ENCODE measurements at regions of chr18 and their contacts with region 1.

Region 1: DNA sequence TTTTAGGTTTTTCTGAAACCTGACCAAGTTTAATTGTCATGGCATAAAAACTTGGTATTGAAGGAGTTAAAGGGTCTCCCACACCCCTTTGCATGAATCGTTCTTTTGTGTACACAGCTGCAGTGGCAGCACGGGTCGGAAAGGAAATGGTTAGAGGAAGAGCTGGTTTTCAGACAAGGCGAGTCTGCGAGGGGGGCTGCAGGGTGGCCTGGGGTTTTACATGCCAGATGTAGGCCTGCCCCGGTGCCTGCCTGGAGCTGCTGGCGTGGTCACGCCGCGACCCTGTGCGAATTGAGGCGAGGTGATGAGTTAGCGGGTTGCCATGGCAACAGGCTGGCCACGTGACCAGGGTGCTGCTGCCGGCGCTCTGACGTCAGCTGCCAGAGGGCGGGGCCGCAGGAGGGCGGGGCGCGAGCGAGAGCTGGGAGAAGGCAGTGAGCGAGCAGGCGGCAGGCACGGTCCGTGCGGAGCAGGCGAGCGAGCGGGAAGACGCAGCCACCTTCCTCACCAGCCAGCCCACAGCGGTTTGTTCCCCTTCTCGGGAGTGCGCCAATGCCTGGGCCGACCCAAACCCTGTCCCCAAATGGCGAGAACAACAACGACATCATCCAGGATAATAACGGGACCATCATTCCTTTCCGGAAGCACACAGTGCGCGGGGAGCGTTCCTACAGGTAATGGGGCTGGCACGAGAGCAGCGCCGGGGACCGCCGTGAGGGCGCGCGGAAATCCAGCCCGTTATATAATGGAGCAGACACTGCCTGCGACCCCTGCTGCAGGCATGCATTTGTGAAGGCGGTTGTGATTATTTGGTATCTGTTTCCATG is at the start of gene MAPRE2:
- DNase-seq: peak; percentile 100
- total RNA-seq, gene MAPRE2: 164 TPM

Region 2: DNA sequence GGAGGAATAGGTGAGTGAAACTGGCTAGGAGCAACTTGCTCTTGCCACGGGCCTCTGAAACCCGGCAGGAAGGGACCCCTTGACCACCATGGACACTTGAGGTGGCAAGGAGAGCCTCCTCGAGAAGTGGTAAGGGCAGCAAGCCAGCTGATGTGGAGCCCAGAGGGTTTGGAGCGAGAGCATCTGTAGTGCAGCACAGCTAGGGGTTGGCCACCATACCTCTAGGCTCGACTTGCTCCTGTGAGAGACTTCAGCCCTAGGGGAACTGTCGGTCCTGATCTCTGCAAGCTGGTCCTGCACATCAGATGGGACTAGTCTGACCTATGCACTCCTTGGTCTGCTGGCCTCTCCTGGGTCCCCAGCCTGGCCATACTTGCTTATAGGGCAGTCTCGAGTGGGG is 1759.1 kb before region 1 on chr18:
- intact Hi-C with region 1: no loop called
- DNase-seq: no peak

Region 3: GRCh38 chr18:34976899-34977837 is 64.0 kb before region 1 on chr18:
- intact Hi-C with region 1: loop called (anchors 5 kb)
- DNase-seq: peak; percentile 92

Region 4: DNA sequence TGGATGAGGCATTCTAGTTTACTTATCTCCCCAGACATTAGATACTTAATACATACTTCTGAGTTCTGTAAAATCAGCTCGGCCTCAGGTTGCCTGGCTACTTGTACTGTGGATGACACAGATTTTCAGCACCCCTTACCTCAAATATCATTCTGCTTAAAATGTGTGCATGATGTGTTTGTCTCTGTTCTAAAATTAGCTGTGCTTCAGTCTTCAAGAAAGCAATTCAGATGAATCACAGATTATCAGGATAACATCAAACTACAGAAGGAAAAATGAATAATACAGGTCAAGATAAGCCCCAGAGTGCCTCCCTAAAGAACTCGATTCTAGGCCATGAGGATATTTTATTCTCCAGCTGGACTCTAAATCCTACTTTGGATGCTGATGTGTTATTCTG is 21.3 kb before region 1 on chr18:
- intact Hi-C with region 1: no loop called
- DNase-seq: no peak

Region 5: GRCh38 chr18:35071819-35072247 is 30.6 kb after region 1 on chr18:
- intact Hi-C with region 1: loop called (anchors 5 kb)
- DNase-seq: no peak

Region 6: DNA sequence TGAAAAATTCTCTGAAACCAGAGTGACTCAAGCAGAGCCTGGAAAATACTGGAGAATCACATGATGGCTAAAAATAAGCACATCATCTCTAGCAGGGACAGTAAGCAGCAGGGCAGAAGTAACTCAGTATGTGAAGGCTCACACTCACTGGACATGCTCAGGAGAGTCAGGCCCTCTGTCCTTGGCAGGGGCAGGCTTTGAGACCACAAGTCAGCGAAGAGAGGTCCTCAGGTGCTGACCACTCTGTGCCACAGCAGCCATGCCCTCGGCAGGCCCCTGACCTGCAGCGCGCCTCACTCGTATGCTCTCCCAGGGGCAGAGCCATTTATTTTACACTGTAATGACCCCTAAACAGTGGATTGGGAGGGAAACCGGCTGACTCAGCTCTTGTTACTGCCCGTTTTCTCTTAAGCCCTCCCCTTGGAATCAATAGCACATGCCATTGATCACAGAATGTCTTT is 76.8 kb after region 1 on chr18:
- intact Hi-C with region 1: loop called (anchors 5 kb)
- DNase-seq: no peak

Region 7: GRCh38 chr18:35136248-35136647 is 95.0 kb after region 1 on chr18:
- intact Hi-C with region 1: loop called (anchors 2 kb)
- DNase-seq: no peak

Measured in cardiac septum (tissue), 1 donor.